HepG2 (cell line): ENCODE measurements at regions of chr2 and their contacts with region 1.

Region 1: GRCh38 chr2:218710687-218711549 is at the start of gene TTLL4:
- DNase-seq: peak; percentile 95
- ATAC-seq: peak; percentile 95
- H3K4me3 ChIP-seq: peak within 1 kb of the TSS; percentile 88 to 97 (median 93)
- H3K27ac ChIP-seq: peak within 1 kb of the TSS; percentile 74
- H3K4me1 ChIP-seq: peaks cover 42% of the 10 kb centered on the region
- H3K27me3 ChIP-seq: no peaks in the 10 kb centered on the region; a peak in 1 of 5 replicates
- CTCF ChIP-seq: peak; percentile 98
- EP300 ChIP-seq: peak in 1 of 2 experiments; percentile 29; a peak in 1 of 4 replicates
- POLR2A ChIP-seq: peak; percentile 79 to 94
- RAD21 ChIP-seq: peak; percentile 84
- total RNA-seq, gene TTLL4: 77.5 and 78.0 TPM in 2 replicates

Region 2: DNA sequence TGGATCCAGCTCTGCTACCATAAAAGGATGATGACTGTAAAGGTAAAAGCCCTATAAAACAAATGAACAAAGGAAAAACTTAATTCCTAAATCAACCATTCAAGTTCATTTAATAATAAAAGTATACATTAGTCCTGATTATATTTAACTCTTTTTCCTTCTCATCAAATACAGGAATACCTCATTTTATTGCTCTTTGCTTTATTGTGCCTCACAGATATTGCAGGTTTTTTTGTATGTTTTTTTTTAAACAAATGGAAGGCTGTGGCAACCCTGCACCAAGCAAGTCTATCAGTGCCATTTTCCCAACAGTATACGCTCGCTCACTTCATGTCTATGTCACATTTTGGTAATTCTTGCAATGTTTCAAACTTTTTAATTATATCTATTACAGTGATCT is 180.9 kb before region 1 on chr2:
- CTCF ChIA-PET with region 1: no interaction called
- POLR2A ChIA-PET with region 1: no interaction called
- in situ Hi-C with region 1: no loop called
- intact Hi-C with region 1: no loop called
- DNase-seq: no peak
- ATAC-seq: no peak
- H3K4me3 ChIP-seq: no peak overlapping the region
- H3K27ac ChIP-seq: no peak overlapping the region
- H3K4me1 ChIP-seq: no peaks in the 10 kb centered on the region
- H3K27me3 ChIP-seq: no peaks in the 10 kb centered on the region
- CTCF ChIP-seq: no peak
- EP300 ChIP-seq: no peak
- POLR2A ChIP-seq: no peak
- RAD21 ChIP-seq: no peak

Region 3: GRCh38 chr2:218648088-218648786 is 62.7 kb before region 1 on chr2:
- CTCF ChIA-PET with region 1: no interaction called
- POLR2A ChIA-PET with region 1: no interaction called
- in situ Hi-C with region 1: no loop called
- intact Hi-C with region 1: no loop called
- DNase-seq: peak; percentile 56
- ATAC-seq: peak; percentile 84
- H3K4me3 ChIP-seq: no peak overlapping the region
- H3K27ac ChIP-seq: no peak overlapping the region
- H3K4me1 ChIP-seq: peaks cover 11% of the 10 kb centered on the region; the same call in 1 of the 2 replicates
- H3K27me3 ChIP-seq: no peaks in the 10 kb centered on the region
- CTCF ChIP-seq: peak; percentile 95
- EP300 ChIP-seq: no peak
- POLR2A ChIP-seq: no peak
- RAD21 ChIP-seq: peak; percentile 77

Region 4: DNA sequence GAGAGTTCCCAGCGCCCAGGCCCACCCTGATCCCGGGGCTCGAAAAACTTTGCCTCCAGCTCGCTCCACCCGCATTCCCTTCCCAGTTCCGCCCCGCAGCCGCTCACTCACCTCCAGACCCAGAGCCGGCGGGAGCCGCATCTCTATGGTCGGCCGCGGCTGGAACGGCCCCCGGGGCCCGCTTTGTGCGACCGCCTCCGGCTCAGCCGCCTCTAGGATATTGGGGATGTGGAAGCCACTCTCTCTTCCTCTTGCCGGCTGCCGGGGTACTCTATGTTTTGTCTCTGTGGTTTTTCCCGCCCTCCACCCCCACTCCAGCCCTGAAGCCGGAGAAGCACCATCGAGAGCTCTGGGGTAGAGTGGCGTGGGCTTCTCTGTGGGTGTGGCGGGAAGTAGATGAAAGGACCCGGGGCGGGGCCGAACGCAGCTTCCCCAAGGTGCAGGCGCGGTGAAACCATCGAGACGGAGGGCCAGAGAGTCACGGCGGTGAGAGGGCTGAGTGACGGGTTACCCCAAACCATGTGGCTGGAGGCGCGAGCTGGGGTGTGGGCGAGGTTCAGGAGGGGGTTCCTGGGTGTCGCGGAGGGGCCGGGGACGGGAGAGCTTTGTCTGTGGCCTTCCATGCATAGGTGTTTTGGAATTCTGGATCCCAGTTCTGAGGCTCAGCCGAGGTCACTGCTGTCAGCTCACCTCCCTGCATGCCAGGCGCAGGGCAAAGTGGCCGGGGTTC is 51.5 kb before region 1 on chr2 and contains the starts of genes BCS1L and ZNF142:
- CTCF ChIA-PET with region 1: no interaction called
- POLR2A ChIA-PET with region 1: interaction called, 13 read pairs
- in situ Hi-C with region 1: no loop called
- intact Hi-C with region 1: no loop called
- DNase-seq: peak; percentile 89
- ATAC-seq: peak; percentile 96
- H3K4me3 ChIP-seq: peak within 1 kb of the TSS; percentile 78 to 92 (median 80)
- H3K27ac ChIP-seq: peak within 1 kb of the TSS; percentile 59
- H3K4me1 ChIP-seq: peaks cover 24% of the 10 kb centered on the region
- H3K27me3 ChIP-seq: no peaks in the 10 kb centered on the region; a peak in 1 of 5 replicates
- CTCF ChIP-seq: peak; percentile 32
- EP300 ChIP-seq: peak in 1 of 2 experiments; percentile 25; a peak in 1 of 4 replicates
- POLR2A ChIP-seq: peak; percentile 66 to 93
- RAD21 ChIP-seq: peak; percentile 51
- total RNA-seq, gene BCS1L: 52.1 and 76.0 TPM in 2 replicates
- total RNA-seq, gene ZNF142: 10.4 and 11.4 TPM in 2 replicates

Region 5: GRCh38 chr2:218671654-218672566 is 39.0 kb before region 1 on chr2 and contains the starts of genes RNF25 and STK36:
- CTCF ChIA-PET with region 1: no interaction called
- POLR2A ChIA-PET with region 1: interaction called, 11 read pairs
- in situ Hi-C with region 1: no loop called
- intact Hi-C with region 1: no loop called
- DNase-seq: peak; percentile 91
- ATAC-seq: peak; percentile 98
- H3K4me3 ChIP-seq: peak within 1 kb of the TSS; percentile 80 to 99 (median 98)
- H3K27ac ChIP-seq: peak within 1 kb of the TSS; percentile 63
- H3K4me1 ChIP-seq: peaks cover 18% of the 10 kb centered on the region
- H3K27me3 ChIP-seq: no peaks in the 10 kb centered on the region; a peak in 1 of 5 replicates
- CTCF ChIP-seq: peak; percentile 26; the same call in 1 of the 2 replicates
- EP300 ChIP-seq: no peak
- POLR2A ChIP-seq: peak; percentile 85 to 94
- RAD21 ChIP-seq: peak; percentile 28; the same call in 1 of the 2 replicates
- total RNA-seq, gene RNF25: 37.0 and 37.1 TPM in 2 replicates
- total RNA-seq, gene STK36: 17.6 and 45.9 TPM in 2 replicates

Region 6: GRCh38 chr2:218727502-218728165 is 16.7 kb after region 1 on chr2:
- CTCF ChIA-PET with region 1: no interaction called
- POLR2A ChIA-PET with region 1: interaction called, 22 read pairs
- in situ Hi-C with region 1: no loop called
- intact Hi-C with region 1: no loop called
- DNase-seq: peak; percentile 66
- ATAC-seq: no peak
- H3K4me3 ChIP-seq: no peak overlapping the region
- H3K27ac ChIP-seq: no peak overlapping the region
- H3K4me1 ChIP-seq: peaks cover 44% of the 10 kb centered on the region
- H3K27me3 ChIP-seq: no peaks in the 10 kb centered on the region
- CTCF ChIP-seq: peak; percentile 77
- EP300 ChIP-seq: no peak
- POLR2A ChIP-seq: no peak
- RAD21 ChIP-seq: peak; percentile 77

Region 7: DNA sequence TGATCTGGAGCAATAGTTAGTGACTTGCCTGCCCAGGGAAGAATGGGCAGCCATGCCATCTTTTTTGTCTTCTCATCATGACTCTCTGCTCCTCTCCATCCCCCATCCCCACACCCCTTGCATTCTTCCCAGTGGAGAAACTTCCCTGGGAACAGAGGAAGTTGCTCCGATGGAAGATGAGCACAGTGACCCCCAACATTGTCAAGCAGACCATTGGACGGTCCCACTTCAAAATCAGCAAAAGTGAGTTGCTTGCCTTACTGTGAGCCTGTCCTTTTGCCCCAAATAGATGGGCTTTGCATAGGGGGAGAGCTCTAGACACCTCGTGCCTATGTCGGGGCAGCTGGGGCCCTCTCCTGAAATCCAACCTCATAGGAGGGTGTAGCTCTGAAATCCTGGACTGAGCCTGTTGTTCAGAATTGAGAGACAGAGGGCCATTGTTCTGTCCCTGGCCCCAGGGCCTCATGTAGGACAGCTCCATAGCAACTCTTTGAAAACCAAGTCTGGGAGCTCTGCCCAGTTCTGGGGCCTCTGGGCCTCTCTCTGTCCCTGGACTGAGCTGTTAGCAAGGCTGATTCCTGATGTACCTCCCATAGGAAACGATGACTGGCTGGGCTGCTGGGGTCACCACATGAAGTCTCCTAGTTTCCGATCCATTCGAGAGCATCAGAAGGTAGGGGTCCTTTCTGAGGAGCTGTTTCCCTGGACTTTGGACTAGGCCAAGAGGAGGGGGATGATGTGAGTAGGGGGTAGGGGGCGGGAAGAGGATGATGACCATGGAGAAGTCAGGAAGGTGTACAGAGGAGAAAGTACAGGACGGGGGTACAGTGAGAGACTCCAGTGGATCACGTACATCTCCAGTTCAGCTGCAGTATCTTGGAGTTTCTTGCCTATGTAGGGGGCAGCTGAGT is 34.9 kb after region 1 on chr2:
- CTCF ChIA-PET with region 1: no interaction called
- POLR2A ChIA-PET with region 1: interaction called, 18 read pairs
- in situ Hi-C with region 1: no loop called
- intact Hi-C with region 1: no loop called
- DNase-seq: peak; percentile 99
- ATAC-seq: peak; percentile 98
- H3K4me3 ChIP-seq: peak overlapping the region in 1 of 3 experiments; percentile 12; a peak in 2 of 6 replicates
- H3K27ac ChIP-seq: peak overlapping the region; percentile 95
- H3K4me1 ChIP-seq: peaks cover 67% of the 10 kb centered on the region
- H3K27me3 ChIP-seq: no peaks in the 10 kb centered on the region
- CTCF ChIP-seq: 0 out of 2 replicates have a peak, but pooled peaks have one; percentile 9
- EP300 ChIP-seq: peak; percentile 25 to 82; a peak in 3 of 4 replicates
- POLR2A ChIP-seq: peak in 1 of 2 experiments; percentile 47; a peak in 2 of 4 replicates
- RAD21 ChIP-seq: no peak; the same call in 1 of the 2 replicates

Region 8: DNA sequence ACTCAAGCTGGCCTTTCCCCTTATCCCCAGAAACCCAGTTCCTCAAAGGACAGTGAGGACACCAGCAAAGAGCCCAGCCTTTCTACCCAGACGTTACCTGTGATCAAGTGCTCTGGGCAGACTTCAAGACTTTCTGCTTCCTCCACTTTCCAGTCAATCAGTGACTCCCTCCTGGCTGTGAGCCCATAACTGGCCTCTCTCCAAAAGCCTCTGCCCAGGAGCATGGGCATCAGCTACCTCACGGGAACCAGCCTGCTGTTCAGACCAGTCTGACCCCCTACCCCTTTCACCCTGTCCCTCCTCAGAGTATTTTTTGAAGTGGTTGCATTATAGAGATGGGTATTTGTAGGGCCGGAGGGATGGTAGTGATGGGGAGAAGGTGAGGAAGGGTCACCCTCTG is 43.3 kb after region 1 on chr2:
- CTCF ChIA-PET with region 1: no interaction called
- POLR2A ChIA-PET with region 1: interaction called, 21 read pairs
- in situ Hi-C with region 1: no loop called
- intact Hi-C with region 1: loop called (anchors 2 kb)
- DNase-seq: no peak
- ATAC-seq: no peak
- H3K4me3 ChIP-seq: no peak overlapping the region
- H3K27ac ChIP-seq: peak overlapping the region; percentile 96
- H3K4me1 ChIP-seq: peaks cover 95% of the 10 kb centered on the region
- H3K27me3 ChIP-seq: no peaks in the 10 kb centered on the region
- CTCF ChIP-seq: no peak
- EP300 ChIP-seq: no peak
- POLR2A ChIP-seq: no peak
- RAD21 ChIP-seq: no peak